Naive thymus-derived CD4-positive, alpha-beta T cell (primary cell): ENCODE measurements at regions of chr3 and their contacts with region 1.

Region 1: GRCh38 chr3:4978204-4978965 is 852 bp upstream of the BHLHE40 start:
- DNase-seq: peak in 7 of 9 donors; percentile 29 to 66 (median 36)
- ATAC-seq: peak; percentile 65
- H3K4me3 ChIP-seq: peak overlapping the region; percentile 71
- H3K4me3 Mint-ChIP-seq: peak overlapping the region; percentile 86 to 100 (median 92)
- H3K27ac ChIP-seq: peak overlapping the region; percentile 59
- H3K27ac Mint-ChIP-seq: peak overlapping the region; percentile 52 to 100 (median 89)
- H3K4me1 ChIP-seq: peaks cover 17 to 38% of the 10 kb centered on the region in 2 donors
- H3K4me1 Mint-ChIP-seq: peaks cover 29 to 46% (median 42%) of the 10 kb centered on the region in 7 donors
- H3K27me3 ChIP-seq: no peaks in the 10 kb centered on the region
- H3K27me3 Mint-ChIP-seq: peaks cover 0 to 2% (median 0%) of the 10 kb centered on the region in 5 donors

Region 2: GRCh38 chr3:4633078-4634004 is 345.0 kb before region 1 on chr3:
- CTCF ChIA-PET with region 1: no interaction called
- POLR2A ChIA-PET with region 1: no interaction called
- intact Hi-C with region 1: no loop called
- DNase-seq: peak in 6 of 9 donors; percentile 24 to 57 (median 44)
- ATAC-seq: peak; percentile 80
- H3K4me3 ChIP-seq: no peak overlapping the region
- H3K4me3 Mint-ChIP-seq: no peak overlapping the region
- H3K27ac ChIP-seq: no peak overlapping the region
- H3K27ac Mint-ChIP-seq: peak overlapping the region in 5 of 9 donors; percentile 1 to 53 (median 43)
- H3K4me1 ChIP-seq: no peaks in the 10 kb centered on the region
- H3K4me1 Mint-ChIP-seq: peaks cover 6 to 9% (median 7%) of the 10 kb centered on the region in 7 donors
- H3K27me3 ChIP-seq: no peaks in the 10 kb centered on the region
- H3K27me3 Mint-ChIP-seq: no peaks in the 10 kb centered on the region

Region 3: GRCh38 chr3:4722103-4722502 is 256.3 kb before region 1 on chr3:
- CTCF ChIA-PET with region 1: no interaction called
- POLR2A ChIA-PET with region 1: no interaction called
- intact Hi-C with region 1: loop called in 1 of 2 experiments (anchors 1 kb)
- DNase-seq: peak in 2 of 9 donors; percentile 27 to 33
- ATAC-seq: peak; percentile 76
- H3K4me3 ChIP-seq: no peak overlapping the region
- H3K4me3 Mint-ChIP-seq: peak overlapping the region in 1 of 10 donors; percentile 33
- H3K27ac ChIP-seq: no peak overlapping the region
- H3K27ac Mint-ChIP-seq: peak overlapping the region in 2 of 9 donors; percentile 34 to 82
- H3K4me1 ChIP-seq: no peaks in the 10 kb centered on the region
- H3K4me1 Mint-ChIP-seq: peaks cover 0 to 67% (median 9%) of the 10 kb centered on the region in 7 donors
- H3K27me3 ChIP-seq: no peaks in the 10 kb centered on the region
- H3K27me3 Mint-ChIP-seq: no peaks in the 10 kb centered on the region

Region 4: GRCh38 chr3:4824926-4825325 is 153.5 kb before region 1 on chr3:
- CTCF ChIA-PET with region 1: interaction called, 18 read pairs
- POLR2A ChIA-PET with region 1: interaction called, 8 read pairs
- intact Hi-C with region 1: loop called (anchors 1 kb)
- DNase-seq: no peak
- ATAC-seq: no peak
- H3K4me3 ChIP-seq: no peak overlapping the region
- H3K4me3 Mint-ChIP-seq: peak overlapping the region; percentile 10 to 93 (median 84)
- H3K27ac ChIP-seq: peak overlapping the region; percentile 59
- H3K27ac Mint-ChIP-seq: peak overlapping the region; percentile 85 to 99 (median 94)
- H3K4me1 ChIP-seq: peaks cover 55 to 83% of the 10 kb centered on the region in 2 donors
- H3K4me1 Mint-ChIP-seq: peaks cover 69 to 99% (median 96%) of the 10 kb centered on the region in 7 donors
- H3K27me3 ChIP-seq: no peaks in the 10 kb centered on the region
- H3K27me3 Mint-ChIP-seq: no peaks in the 10 kb centered on the region

Region 5: DNA sequence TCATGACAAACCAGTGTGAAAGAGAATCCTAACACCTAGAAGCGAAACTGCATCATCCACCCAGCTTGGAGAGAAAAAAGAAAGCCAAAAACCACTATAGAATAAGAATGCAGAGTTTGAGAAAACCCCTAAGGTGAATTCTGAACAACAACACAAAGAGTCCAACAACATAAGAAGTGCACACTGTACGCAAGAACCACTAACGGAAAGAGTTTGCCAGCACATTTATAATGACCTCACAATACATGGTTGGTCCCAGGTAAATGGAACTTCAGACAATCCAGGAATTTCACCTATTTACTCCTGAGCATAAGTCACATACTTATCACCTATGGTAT is 127.5 kb before region 1 on chr3:
- CTCF ChIA-PET with region 1: interaction called, 5 read pairs
- POLR2A ChIA-PET with region 1: interaction called, 4 read pairs
- intact Hi-C with region 1: loop called in 1 of 2 experiments (anchors 1 kb)
- DNase-seq: peak in 6 of 9 donors; percentile 19 to 64 (median 46)
- ATAC-seq: peak; percentile 83
- H3K4me3 ChIP-seq: no peak overlapping the region
- H3K4me3 Mint-ChIP-seq: peak overlapping the region in 9 of 10 donors; percentile 4 to 84 (median 56)
- H3K27ac ChIP-seq: peak overlapping the region; percentile 81
- H3K27ac Mint-ChIP-seq: peak overlapping the region; percentile 85 to 99 (median 90)
- H3K4me1 ChIP-seq: peaks cover 37 to 58% of the 10 kb centered on the region in 2 donors
- H3K4me1 Mint-ChIP-seq: peaks cover 49 to 92% (median 86%) of the 10 kb centered on the region in 7 donors
- H3K27me3 ChIP-seq: no peaks in the 10 kb centered on the region
- H3K27me3 Mint-ChIP-seq: no peaks in the 10 kb centered on the region

Region 6: DNA sequence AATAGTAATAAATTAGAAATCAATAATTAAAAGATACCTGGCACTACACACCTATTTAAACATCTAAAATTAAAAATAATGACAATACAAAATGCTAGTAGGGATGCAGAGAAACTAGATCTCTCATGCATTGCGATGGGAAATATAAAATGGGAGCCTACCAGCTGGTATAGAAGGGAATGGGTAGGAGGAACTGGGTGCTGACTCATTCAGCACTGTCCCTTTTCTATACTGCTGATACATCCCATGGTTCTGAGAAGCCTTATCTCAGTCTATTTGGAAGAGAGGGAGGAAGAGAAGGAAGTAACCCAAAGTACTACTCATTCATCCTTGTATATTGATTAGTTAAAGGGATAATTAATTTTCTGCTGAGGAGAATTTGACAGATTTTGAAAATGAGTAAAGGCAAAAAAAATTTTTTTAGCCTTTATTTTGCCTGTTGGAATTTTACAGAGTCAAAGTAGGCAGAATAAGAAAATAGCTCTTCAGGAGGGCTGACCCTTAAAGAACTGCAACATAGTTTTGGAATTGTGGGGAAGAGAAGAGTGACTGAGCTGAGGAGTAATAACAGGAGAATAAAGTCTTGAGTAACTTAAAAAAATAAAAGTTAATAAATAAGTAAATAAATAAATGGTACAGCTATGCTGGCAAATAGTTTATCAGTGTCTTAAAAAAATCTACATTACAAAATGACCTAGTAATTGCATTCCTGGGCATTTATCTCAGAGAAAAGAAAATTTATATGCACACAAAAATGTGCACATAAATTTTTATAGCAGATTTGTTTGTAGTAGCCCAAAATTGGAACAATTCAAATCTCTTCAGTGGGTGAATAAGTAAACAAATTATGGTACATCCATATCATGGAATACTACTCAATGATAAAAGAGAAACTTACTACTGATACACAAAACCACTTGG is 14.5 kb before region 1 on chr3:
- CTCF ChIA-PET with region 1: no interaction called
- POLR2A ChIA-PET with region 1: interaction called, 5 read pairs
- intact Hi-C with region 1: loop called in 1 of 2 experiments (anchors 2 kb)
- DNase-seq: no peak
- ATAC-seq: no peak
- H3K4me3 ChIP-seq: no peak overlapping the region
- H3K4me3 Mint-ChIP-seq: no peak overlapping the region
- H3K27ac ChIP-seq: no peak overlapping the region
- H3K27ac Mint-ChIP-seq: peak overlapping the region in 1 of 9 donors; percentile 63
- H3K4me1 ChIP-seq: peaks cover 8 to 10% of the 10 kb centered on the region in 2 donors
- H3K4me1 Mint-ChIP-seq: peaks cover 3 to 26% (median 19%) of the 10 kb centered on the region in 7 donors
- H3K27me3 ChIP-seq: no peaks in the 10 kb centered on the region
- H3K27me3 Mint-ChIP-seq: no peaks in the 10 kb centered on the region

Region 7: GRCh38 chr3:5057857-5058324 is 79.5 kb after region 1 on chr3:
- CTCF ChIA-PET with region 1: interaction called, 4 read pairs
- POLR2A ChIA-PET with region 1: no interaction called
- intact Hi-C with region 1: loop called in 1 of 2 experiments (anchors 1 kb)
- DNase-seq: peak; percentile 22 to 75 (median 64)
- ATAC-seq: peak; percentile 92
- H3K4me3 ChIP-seq: no peak overlapping the region
- H3K4me3 Mint-ChIP-seq: peak overlapping the region in 1 of 10 donors; percentile 25
- H3K27ac ChIP-seq: no peak overlapping the region
- H3K27ac Mint-ChIP-seq: no peak overlapping the region
- H3K4me1 ChIP-seq: no peaks in the 10 kb centered on the region
- H3K4me1 Mint-ChIP-seq: peaks cover 0 to 38% (median 0%) of the 10 kb centered on the region in 7 donors
- H3K27me3 ChIP-seq: no peaks in the 10 kb centered on the region
- H3K27me3 Mint-ChIP-seq: peaks cover 0 to 4% (median 0%) of the 10 kb centered on the region in 5 donors